Activated CD4-positive, alpha-beta T cell treated with anti-CD3 and anti-CD28 coated beads for 36 hours (primary cell): ENCODE measurements at regions of chr16 and their contacts with region 1.

Region 1: DNA sequence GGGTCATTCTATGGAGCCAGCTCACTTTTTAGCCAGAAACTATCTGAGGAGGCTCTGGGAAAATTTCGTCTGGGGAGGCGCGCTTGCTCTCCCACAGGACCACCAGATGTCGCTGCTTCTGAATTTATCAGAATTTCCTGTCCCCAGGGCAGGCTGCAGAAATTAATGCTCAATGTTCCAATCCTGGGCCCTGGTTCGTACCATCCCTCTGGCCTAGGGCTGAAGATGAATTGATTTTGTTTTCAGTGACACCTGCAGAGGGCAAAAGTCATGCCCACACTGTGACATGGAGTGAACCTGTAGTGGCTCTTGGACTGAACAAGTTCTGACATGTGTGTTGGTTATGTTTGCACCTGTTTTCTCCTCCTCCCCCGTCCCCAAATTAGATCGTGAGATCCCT is 482.6 kb downstream of the NPIPA7 start:
- DNase-seq: peak; percentile 70
- ATAC-seq: no peak
- H3K4me3 Mint-ChIP-seq: no peak overlapping the region
- H3K27ac Mint-ChIP-seq: no peak overlapping the region
- H3K4me1 Mint-ChIP-seq: no peaks in the 10 kb centered on the region
- H3K27me3 Mint-ChIP-seq: peaks cover 6% of the 10 kb centered on the region

Region 2: DNA sequence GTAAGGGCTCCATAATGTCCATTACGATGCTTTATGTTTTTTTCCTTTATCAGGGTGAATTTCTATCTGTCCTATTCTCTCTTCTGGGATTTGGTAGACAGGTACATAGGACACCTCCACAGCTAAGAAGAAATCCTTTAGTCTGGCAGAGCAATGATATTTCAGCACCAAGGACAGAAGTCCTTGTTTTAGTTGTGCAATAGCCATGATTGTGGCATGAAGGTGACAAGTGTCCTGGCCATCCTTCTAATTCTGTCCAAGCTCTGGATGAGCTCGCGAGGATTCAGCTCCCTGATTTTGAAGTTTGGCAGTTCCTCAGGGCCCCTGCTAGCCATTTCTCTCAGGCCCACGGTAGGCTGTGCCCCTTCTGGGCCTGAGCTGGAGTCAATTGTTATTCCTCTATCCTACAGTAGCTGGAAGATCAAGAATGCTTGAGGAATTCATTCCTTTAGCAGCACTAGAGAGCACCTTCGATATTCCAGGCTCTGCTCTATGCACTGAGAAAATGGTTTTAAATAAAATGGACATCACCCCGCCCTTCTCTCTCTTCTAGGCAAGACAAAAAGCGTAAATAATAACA is 288.4 kb after region 1 on chr16:
- CTCF ChIA-PET with region 1: interaction called, 3 read pairs
- POLR2A ChIA-PET with region 1: no interaction called
- intact Hi-C with region 1: loop called in 1 of 2 experiments (anchors 10 kb)
- DNase-seq: no peak
- ATAC-seq: no peak
- H3K4me3 Mint-ChIP-seq: no peak overlapping the region
- H3K27ac Mint-ChIP-seq: no peak overlapping the region
- H3K4me1 Mint-ChIP-seq: no peaks in the 10 kb centered on the region
- H3K27me3 Mint-ChIP-seq: no peaks in the 10 kb centered on the region